Esophagus muscularis mucosa (tissue), 4 donors: ENCODE measurements at regions of chr6 and their contacts with region 1.

Region 1: GRCh38 chr6:36075656-36076055 is 48.0 kb downstream of the MAPK14 start:
- DNase-seq: no peak
- H3K4me3 ChIP-seq: no peak overlapping the region
- H3K27ac ChIP-seq: peak overlapping the region; percentile 6 to 78 (median 19)
- H3K4me1 ChIP-seq: peaks cover 0 to 53% (median 44%) of the 10 kb centered on the region in 4 donors
- H3K27me3 ChIP-seq: no peaks in the 10 kb centered on the region
- CTCF ChIP-seq: peak in 1 of 3 experiments; percentile 17
- EP300 ChIP-seq: no peak
- POLR2A ChIP-seq: no peak

Region 2: GRCh38 chr6:36027501-36028087 is 48.1 kb before region 1 on chr6 and contains the start of gene MAPK14:
- intact Hi-C with region 1: no loop called
- DNase-seq: peak; percentile 100
- H3K4me3 ChIP-seq: peak within 1 kb of the TSS; percentile 83 to 96 (median 95)
- H3K27ac ChIP-seq: peak within 1 kb of the TSS; percentile 92 to 96 (median 94)
- H3K4me1 ChIP-seq: peaks cover 13 to 44% (median 41%) of the 10 kb centered on the region in 4 donors
- H3K27me3 ChIP-seq: peaks cover 0 to 13% (median 5%) of the 10 kb centered on the region in 4 donors
- CTCF ChIP-seq: peak; percentile 91 to 99 (median 95)
- EP300 ChIP-seq: no peak
- POLR2A ChIP-seq: peak; percentile 92
- total RNA-seq, gene MAPK14: 53.2 to 70.7 (median 66.9) TPM

Region 3: DNA sequence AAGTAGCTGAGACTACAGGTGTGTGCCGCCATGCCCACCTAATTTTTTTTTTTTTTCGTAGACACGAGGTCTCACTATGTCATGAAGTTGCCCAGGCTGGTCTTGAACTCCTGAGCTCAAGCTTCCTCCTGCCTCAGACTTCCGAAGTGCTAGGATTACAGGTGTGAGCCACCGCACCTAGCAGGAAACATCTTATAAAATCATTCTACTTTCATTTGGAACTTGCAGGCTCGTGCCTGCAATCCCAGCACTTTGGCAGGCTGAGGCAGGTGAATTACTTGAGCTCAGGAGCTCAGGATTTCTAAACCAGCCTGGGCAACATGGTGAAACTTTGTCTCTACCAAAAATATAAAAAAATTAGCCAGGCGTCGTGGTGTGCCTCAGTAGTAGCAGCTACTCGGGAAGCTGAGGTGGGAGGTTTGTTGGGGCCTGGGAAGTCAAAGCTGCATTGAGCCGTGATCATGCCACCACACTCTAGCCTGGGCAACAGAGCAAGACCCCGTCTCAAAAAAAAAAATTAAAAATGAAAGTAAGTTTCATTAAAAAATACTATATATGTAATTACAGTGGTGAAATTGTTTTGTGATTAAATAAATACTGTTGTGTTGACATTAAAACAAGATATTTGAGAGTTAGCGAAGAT is 32.9 kb before region 1 on chr6:
- intact Hi-C with region 1: loop called (anchors 5 kb)
- DNase-seq: no peak
- H3K4me3 ChIP-seq: no peak overlapping the region
- H3K27ac ChIP-seq: no peak overlapping the region
- H3K4me1 ChIP-seq: peaks cover 20 to 75% (median 67%) of the 10 kb centered on the region in 4 donors
- H3K27me3 ChIP-seq: no peaks in the 10 kb centered on the region
- CTCF ChIP-seq: no peak
- EP300 ChIP-seq: no peak
- POLR2A ChIP-seq: no peak

Region 4: DNA sequence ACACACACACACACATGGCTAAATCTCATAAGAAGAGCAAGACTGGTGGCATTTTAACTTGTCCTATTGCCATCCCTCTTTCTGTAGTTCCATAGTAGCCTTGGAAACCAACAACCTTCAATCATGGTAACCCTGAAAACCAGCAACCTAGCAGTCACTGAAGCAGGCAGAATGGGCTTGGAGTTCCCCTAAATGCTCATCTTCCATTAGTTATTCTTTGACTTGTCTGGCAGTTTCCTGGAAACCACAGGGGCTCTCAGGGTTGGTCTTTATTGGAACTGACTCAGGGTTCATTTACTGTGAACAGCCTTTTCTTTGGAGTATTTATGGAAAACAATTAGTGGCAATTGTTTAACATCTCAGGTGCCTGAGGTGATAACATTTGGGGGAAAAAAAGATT is 101.5 kb after region 1 on chr6:
- intact Hi-C with region 1: no loop called
- DNase-seq: no peak
- H3K4me3 ChIP-seq: no peak overlapping the region
- H3K27ac ChIP-seq: no peak overlapping the region
- H3K4me1 ChIP-seq: no peaks in the 10 kb centered on the region
- H3K27me3 ChIP-seq: no peaks in the 10 kb centered on the region
- CTCF ChIP-seq: no peak
- EP300 ChIP-seq: no peak
- POLR2A ChIP-seq: no peak

Region 5: GRCh38 chr6:36196880-36197548 is 121.4 kb after region 1 on chr6:
- intact Hi-C with region 1: no loop called
- DNase-seq: peak; percentile 99
- H3K4me3 ChIP-seq: peak overlapping the region; percentile 87 to 95 (median 90)
- H3K27ac ChIP-seq: peak overlapping the region; percentile 96 to 99 (median 98)
- H3K4me1 ChIP-seq: peaks cover 14 to 51% (median 35%) of the 10 kb centered on the region in 4 donors
- H3K27me3 ChIP-seq: no peaks in the 10 kb centered on the region
- CTCF ChIP-seq: no peak
- EP300 ChIP-seq: no peak
- POLR2A ChIP-seq: peak; percentile 44

Region 6: DNA sequence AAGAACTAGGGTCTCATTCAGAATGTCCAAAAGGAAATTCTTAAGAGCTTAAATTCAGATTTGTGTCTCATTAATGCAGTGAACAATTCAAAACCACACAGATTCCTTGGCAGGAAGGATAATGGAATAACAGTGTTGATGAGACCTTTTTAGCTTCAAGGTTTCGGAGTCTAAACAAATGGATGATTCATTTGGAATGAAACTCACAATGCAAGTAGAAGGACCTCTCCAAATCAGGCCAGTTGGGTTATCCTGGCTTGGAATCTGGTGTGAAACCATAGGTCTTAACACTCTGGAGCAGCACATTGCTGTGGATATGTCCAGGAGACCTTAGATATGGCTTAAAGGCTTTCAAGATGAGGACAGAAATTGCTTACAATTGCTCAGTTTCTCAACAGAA is 412.0 kb after region 1 on chr6:
- intact Hi-C with region 1: no loop called
- DNase-seq: no peak
- H3K4me3 ChIP-seq: no peak overlapping the region
- H3K27ac ChIP-seq: no peak overlapping the region
- H3K4me1 ChIP-seq: peaks cover 5 to 13% (median 12%) of the 10 kb centered on the region in 4 donors
- H3K27me3 ChIP-seq: no peaks in the 10 kb centered on the region
- CTCF ChIP-seq: no peak
- EP300 ChIP-seq: no peak
- POLR2A ChIP-seq: no peak